CD8-positive, alpha-beta memory T cell (primary cell): ENCODE measurements at regions of chr1 and their contacts with region 1.

Region 1: DNA sequence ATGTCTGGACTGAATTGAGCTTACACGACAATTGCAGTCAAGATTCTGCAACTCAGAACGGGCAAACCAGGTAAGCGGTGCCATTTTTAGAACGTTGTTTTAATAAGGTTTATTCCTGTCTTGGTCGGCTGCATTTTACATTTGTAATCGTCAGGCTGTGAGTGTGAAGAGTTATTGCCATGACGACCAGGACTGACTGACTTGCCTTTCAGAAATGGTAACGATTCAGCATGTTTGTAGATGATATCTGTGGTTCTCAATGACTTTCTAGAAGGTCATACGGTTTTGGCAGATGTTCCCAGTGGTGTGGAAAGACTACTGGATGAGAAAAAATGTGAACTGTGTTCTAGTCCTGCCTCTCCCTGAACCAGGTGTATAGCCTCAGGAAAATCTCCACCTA is 271.3 kb upstream of the B3GALT2 start:
- DNase-seq: peak in 3 of 5 donors; percentile 5 to 58 (median 51)
- H3K4me3 ChIP-seq: no peak overlapping the region
- H3K4me3 Mint-ChIP-seq: no peak overlapping the region
- H3K27ac ChIP-seq: peak overlapping the region; percentile 48
- H3K27ac Mint-ChIP-seq: no peak overlapping the region
- H3K4me1 ChIP-seq: peaks cover 10% of the 10 kb centered on the region
- H3K4me1 Mint-ChIP-seq: peaks cover 31 to 40% (median 38%) of the 10 kb centered on the region in 3 donors
- H3K27me3 ChIP-seq: no peaks in the 10 kb centered on the region
- H3K27me3 Mint-ChIP-seq: no peaks in the 10 kb centered on the region

Region 2: DNA sequence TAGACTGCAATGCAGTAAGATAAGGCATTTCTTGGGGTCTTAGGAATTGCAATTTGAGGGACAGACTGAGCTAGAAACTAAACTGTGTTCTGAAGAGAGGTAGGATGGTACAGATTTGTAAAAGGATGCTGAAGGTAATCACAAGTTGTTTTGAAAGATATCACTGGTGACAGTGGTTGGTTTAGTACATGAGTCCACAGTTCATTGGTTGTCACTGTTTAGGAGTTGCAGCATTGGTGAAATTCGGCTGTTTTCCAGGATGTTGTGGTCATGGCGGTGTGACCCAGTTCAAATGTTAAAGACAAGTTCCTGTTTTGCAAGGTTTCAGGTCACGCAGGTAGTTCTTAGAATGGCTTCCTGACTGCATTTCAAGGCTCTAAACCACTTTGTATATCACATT is 21.5 kb after region 1 on chr1:
- CTCF ChIA-PET with region 1: interaction called, 5 read pairs
- POLR2A ChIA-PET with region 1: interaction called, 17 read pairs
- DNase-seq: peak; percentile 53 to 90 (median 85)
- H3K4me3 ChIP-seq: peak overlapping the region; percentile 23
- H3K4me3 Mint-ChIP-seq: peak overlapping the region; percentile 12 to 63 (median 49)
- H3K27ac ChIP-seq: peak overlapping the region; percentile 7
- H3K27ac Mint-ChIP-seq: peak overlapping the region; percentile 85 to 99 (median 91)
- H3K4me1 ChIP-seq: peaks cover 44% of the 10 kb centered on the region
- H3K4me1 Mint-ChIP-seq: peaks cover 56 to 72% (median 71%) of the 10 kb centered on the region in 3 donors
- H3K27me3 ChIP-seq: no peaks in the 10 kb centered on the region
- H3K27me3 Mint-ChIP-seq: no peaks in the 10 kb centered on the region